ENCODE measurements at regions of chr2 and their contacts with region 1.

Region 1: GRCh38 chr2:239274391-239275043 is 126.3 kb downstream of the HDAC4 start:
- DNase-seq: peak; percentile 78 to 86 (median 80)
- ATAC-seq: peak; percentile 87
- H3K4me3 ChIP-seq: peak overlapping the region; percentile 41
- H3K27ac ChIP-seq: peak overlapping the region; percentile 97
- H3K4me1 ChIP-seq: peaks cover 54 to 57% of the 10 kb centered on the region in 2 experiments
- H3K27me3 ChIP-seq: no peaks in the 10 kb centered on the region; a peak in 1 of 5 replicates
- CTCF ChIP-seq: no peak
- EP300 ChIP-seq: no peak
- POLR2A ChIP-seq: peak; percentile 59
- RAD21 ChIP-seq: no peak

Region 2: GRCh38 chr2:239316562-239317465 is 42.3 kb after region 1 on chr2:
- CTCF ChIA-PET with region 1: no interaction called
- POLR2A ChIA-PET with region 1: interaction called, 3 read pairs
- in situ Hi-C with region 1: no loop called
- intact Hi-C with region 1: loop called (anchors 1 kb)
- DNase-seq: peak; percentile 74 to 79 (median 78)
- ATAC-seq: peak; percentile 81
- H3K4me3 ChIP-seq: peak overlapping the region; percentile 27; the same call in 1 of the 2 replicates
- H3K27ac ChIP-seq: peak overlapping the region; percentile 79
- H3K4me1 ChIP-seq: peaks cover 21 to 31% of the 10 kb centered on the region in 2 experiments; a peak in 4 of 5 replicates
- H3K27me3 ChIP-seq: no peaks in the 10 kb centered on the region
- CTCF ChIP-seq: 0 out of 6 replicates have a peak, but pooled peaks of 1 of the 3 experiments have one; percentile 2
- EP300 ChIP-seq: no peak
- POLR2A ChIP-seq: peak; percentile 46
- RAD21 ChIP-seq: no peak

Measured in K562 (cell line).